Endothelial cell of umbilical vein (primary cell): ENCODE measurements at regions of chr2 and their contacts with region 1.

Region 1: DNA sequence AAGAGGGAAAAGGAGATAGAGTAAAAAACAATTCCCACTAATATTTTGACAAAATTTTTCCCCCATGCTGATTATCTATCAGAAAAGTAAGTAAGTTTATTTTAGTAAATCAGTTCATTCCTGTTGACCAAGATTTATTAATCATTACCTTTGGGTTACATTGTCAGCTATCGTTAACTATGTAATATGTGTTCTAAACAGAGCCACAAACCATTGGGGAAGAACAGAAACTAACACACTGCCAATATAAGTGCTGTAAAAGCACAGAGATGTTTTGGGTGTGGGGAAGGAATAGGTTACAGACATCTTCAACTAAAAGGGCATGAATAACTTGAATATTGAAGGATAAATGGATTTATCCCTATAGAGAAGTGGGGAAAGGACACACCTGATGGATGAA is 42.5 kb upstream of the ACADL start:
- DNase-seq: no peak
- H3K4me3 ChIP-seq: no peak overlapping the region
- H3K27ac ChIP-seq: no peak overlapping the region
- H3K4me1 ChIP-seq: no peaks in the 10 kb centered on the region
- H3K27me3 ChIP-seq: no peaks in the 10 kb centered on the region
- CTCF ChIP-seq: no peak
- POLR2A ChIP-seq: no peak

Region 2: DNA sequence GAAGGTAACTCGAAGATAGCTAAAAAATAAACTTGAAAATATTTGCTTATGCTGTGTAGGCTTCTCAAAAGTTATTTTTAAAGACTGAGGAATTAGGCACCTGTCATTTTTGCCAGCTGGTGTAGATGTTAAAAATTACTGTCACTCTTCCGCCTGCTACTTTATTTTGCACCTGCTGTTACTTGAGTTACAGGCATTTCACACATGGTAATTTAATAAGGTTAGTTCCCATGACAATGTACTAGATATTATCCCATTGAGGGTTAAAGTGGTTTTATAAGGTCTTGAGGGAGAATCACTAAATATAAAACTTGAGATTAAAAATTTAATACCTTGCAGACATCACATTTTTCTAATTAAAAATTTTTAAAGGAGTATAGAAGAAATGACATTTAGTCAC is 20.7 kb after region 1 on chr2:
- CTCF ChIA-PET with region 1: no interaction called
- POLR2A ChIA-PET with region 1: no interaction called
- dilution Hi-C with region 1: no loop called
- intact Hi-C with region 1: loop called (anchors 1 kb)
- DNase-seq: no peak
- H3K4me3 ChIP-seq: no peak overlapping the region
- H3K27ac ChIP-seq: no peak overlapping the region
- H3K4me1 ChIP-seq: no peaks in the 10 kb centered on the region
- H3K27me3 ChIP-seq: no peaks in the 10 kb centered on the region
- CTCF ChIP-seq: no peak
- POLR2A ChIP-seq: no peak